ENCODE measurements at regions of chr1 and their contacts with region 1.

Region 1: DNA sequence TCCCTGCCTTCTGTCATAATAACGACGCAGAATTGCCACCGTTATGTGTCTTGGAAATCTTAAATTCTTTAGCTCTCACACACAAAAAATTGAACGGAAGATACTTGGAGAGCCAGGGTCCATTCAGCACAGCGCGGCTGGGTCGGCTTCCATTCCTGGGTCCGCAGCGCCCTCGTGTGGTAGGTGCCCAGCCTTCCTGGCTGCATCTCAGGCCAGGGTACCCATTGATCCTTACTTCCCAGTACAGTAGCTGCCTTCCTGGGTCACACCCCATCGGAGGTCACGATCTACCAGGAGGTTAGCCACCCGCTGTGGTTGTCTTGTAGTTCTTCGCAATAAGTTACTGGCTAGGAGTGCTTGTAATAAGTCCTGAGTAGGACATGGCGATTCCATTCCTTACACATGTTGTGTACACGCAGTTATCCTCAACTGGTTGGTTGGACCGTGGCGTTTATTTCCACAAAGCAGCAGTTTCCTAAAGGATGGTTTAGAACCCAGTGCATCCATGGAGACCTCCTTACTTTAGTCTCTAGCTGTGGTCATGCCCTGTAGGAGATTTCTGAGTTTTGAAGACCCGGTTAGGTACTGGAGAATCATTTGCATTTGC is 9.9 kb upstream of the MTARC1 start:
- DNase-seq: peak in 1 of 2 donors; percentile 86
- H3K4me3 ChIP-seq: no peak overlapping the region
- H3K27ac ChIP-seq: no peak overlapping the region
- H3K4me1 ChIP-seq: no peaks in the 10 kb centered on the region
- H3K27me3 ChIP-seq: no peaks in the 10 kb centered on the region
- CTCF ChIP-seq: peak; percentile 74 to 90 (median 84)

Region 2: DNA sequence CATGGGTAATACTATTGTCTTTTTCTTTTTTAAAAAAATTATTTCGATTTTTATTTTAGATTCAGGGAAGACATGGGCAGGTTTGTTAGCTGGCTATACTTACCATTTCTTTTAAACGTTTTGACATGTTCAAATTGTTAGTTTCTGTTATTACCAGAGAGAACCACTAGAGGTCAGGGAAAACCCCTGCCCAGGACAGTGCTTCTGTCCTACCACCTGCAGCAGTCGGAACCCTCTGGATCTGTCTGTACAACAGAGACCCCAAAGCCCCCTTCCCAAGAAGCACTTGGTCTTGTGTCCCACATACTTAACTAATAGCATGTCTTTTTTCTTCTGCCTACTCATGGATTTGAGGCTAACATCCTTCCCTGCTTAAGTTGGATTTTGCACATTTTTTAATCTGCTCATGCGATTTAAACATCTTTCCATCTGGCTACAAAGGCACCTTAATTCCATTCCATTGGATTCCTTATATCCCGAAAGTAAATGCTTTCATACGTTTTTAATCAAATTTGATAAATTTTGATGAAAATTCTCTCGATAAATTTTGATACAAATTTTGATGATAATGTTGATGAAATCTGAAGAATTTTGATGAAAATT is 96.6 kb before region 1 on chr1:
- intact Hi-C with region 1: loop called (anchors 1 kb)
- DNase-seq: no peak
- H3K4me3 ChIP-seq: no peak overlapping the region
- H3K27ac ChIP-seq: no peak overlapping the region
- H3K4me1 ChIP-seq: no peaks in the 10 kb centered on the region
- H3K27me3 ChIP-seq: no peaks in the 10 kb centered on the region
- CTCF ChIP-seq: peak; percentile 60 to 82 (median 80)

Region 3: GRCh38 chr1:220690140-220691025 is 86.4 kb before region 1 on chr1 and contains the start of gene C1orf115:
- intact Hi-C with region 1: loop called (anchors 1 kb)
- DNase-seq: peak; percentile 37 to 86
- H3K4me3 ChIP-seq: peak within 1 kb of the TSS; percentile 75 to 77
- H3K27ac ChIP-seq: no peak within 1 kb of the TSS
- H3K4me1 ChIP-seq: no peaks in the 10 kb centered on the region
- H3K27me3 ChIP-seq: no peaks in the 10 kb centered on the region
- CTCF ChIP-seq: peak; percentile 89 to 99 (median 96)
- total RNA-seq, gene C1orf115: 18.4 TPM

Region 4: GRCh38 chr1:220803401-220804201 is 26.8 kb after region 1 on chr1:
- intact Hi-C with region 1: loop called (anchors 2 kb)
- DNase-seq: no peak
- H3K4me3 ChIP-seq: no peak overlapping the region
- H3K27ac ChIP-seq: peak overlapping the region; percentile 58 to 68
- H3K4me1 ChIP-seq: peaks cover 0 to 5% of the 10 kb centered on the region in 2 donors
- H3K27me3 ChIP-seq: no peaks in the 10 kb centered on the region
- CTCF ChIP-seq: peak; percentile 16 to 78 (median 69)